ENCODE measurements at regions of chr7 and their contacts with region 1.

Region 1: DNA sequence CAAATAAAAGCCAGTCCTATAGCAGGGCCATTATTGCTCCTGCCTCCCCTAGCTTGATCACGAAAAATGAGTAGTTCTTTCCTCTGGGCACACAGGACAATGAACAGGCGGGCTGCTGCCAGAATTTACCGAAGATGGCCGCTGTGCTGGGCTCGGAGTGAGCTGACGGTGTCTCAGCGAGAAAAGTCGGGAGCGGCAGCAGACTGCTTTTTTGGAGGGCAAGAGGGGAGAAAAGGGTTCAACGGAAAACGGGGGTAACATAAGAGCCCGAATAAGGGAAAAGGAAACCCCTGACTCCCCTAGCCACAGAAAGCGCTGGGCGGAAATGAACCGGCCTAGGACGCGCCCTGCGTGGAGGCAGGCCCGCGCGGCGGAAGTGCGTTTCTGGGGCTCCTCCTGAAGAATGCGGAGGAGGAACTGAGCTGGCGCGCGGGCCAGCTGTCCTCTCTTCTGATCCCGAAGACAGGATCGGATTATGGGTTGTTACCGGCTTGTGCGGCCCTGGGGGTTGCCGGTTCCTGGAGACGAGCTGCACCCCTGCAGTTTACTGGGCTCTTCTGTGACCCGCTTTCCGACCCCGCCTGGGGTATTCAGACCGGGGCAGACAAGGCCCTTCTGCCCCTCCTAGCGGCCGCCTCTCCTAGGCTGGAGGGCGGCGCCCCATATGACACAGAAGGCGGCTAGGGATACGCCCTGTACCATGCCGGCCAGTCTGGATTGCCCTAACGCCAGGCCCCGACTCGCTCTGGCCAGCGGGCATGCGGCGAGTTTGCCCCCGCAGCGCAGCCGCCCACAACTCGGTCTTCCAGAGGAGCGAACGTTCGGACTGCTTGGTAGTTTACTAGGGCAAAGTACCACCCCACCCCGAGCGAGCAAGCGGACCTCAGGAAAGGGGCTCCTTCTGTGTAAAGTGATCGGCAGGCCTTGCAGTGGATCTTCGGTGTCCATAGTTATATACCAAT is 30.1 kb upstream of the KMT2E start:
- DNase-seq: no peak
- H3K4me3 ChIP-seq: peak overlapping the region; percentile 67
- CTCF ChIP-seq: peak; percentile 70

Region 2: GRCh38 chr7:104640506-104640905 is 343.4 kb before region 1 on chr7:
- CTCF ChIA-PET with region 1: no interaction called
- POLR2A ChIA-PET with region 1: no interaction called
- DNase-seq: no peak
- H3K4me3 ChIP-seq: no peak overlapping the region
- CTCF ChIP-seq: no peak

Region 3: DNA sequence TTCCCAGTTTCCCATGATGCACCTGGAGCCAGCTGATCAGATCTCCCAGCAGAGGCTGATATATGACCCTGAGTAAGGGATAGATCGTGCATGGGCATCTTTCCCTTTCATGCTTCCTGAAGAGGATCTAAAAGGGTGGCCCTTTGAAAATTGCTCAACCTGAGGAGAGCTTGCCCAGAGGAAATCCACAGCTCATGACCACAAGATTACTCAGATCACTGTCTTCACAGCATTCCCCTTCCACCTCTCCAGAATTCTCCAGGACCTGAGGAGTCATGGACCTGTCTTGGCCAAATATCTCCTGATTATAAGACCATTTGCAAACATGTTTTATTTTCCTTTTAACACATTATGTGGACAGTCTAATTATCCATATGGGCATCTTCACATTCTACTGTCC is 327.4 kb before region 1 on chr7:
- CTCF ChIA-PET with region 1: no interaction called
- POLR2A ChIA-PET with region 1: no interaction called
- DNase-seq: no peak
- H3K4me3 ChIP-seq: no peak overlapping the region
- CTCF ChIP-seq: no peak

Region 4: GRCh38 chr7:104963991-104964385 is 19.9 kb before region 1 on chr7:
- CTCF ChIA-PET with region 1: interaction called, 57 read pairs
- POLR2A ChIA-PET with region 1: no interaction called
- DNase-seq: no peak
- H3K4me3 ChIP-seq: no peak overlapping the region
- CTCF ChIP-seq: no peak

Region 5: GRCh38 chr7:104971290-104972071 is 12.4 kb before region 1 on chr7:
- CTCF ChIA-PET with region 1: interaction called, 57 read pairs
- POLR2A ChIA-PET with region 1: interaction called, 6 read pairs
- DNase-seq: no peak
- H3K4me3 ChIP-seq: no peak overlapping the region
- CTCF ChIP-seq: no peak

Region 6: GRCh38 chr7:105013221-105013815 is 29.5 kb after region 1 on chr7:
- CTCF ChIA-PET with region 1: interaction called, 56 read pairs
- POLR2A ChIA-PET with region 1: interaction called, 56 read pairs
- DNase-seq: peak; percentile 72
- H3K4me3 ChIP-seq: peak overlapping the region; percentile 97
- CTCF ChIP-seq: peak; percentile 67

Region 7: DNA sequence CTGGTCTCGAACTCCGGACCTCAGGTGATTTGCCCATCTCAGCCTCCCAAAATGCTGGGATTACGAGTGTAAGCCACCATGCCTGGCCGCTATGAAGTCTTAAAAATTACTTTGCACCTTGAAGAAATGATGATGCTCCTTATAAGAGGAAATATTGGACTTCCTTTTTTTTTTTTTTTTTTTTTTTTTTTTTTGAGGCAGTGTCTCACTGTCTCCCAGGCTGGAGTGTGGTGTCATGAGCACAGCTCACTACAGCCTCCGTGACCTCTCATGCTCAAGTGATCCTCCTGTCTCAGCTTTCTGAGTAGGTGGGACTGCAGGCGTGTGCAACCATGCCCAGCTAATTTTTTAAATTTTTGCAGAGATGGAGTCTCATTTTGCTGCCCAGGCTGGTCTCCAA is 95.5 kb after region 1 on chr7:
- CTCF ChIA-PET with region 1: interaction called, 10 read pairs
- POLR2A ChIA-PET with region 1: no interaction called
- DNase-seq: no peak
- H3K4me3 ChIP-seq: no peak overlapping the region
- CTCF ChIP-seq: no peak